Psoas muscle (tissue), 8 donors: ENCODE measurements at regions of chr11 and their contacts with region 1.

Region 1: GRCh38 chr11:17432002-17432401 is 43.5 kb upstream of the KCNJ11 start:
- DNase-seq: no peak
- ATAC-seq: peak; percentile 61 to 86 (median 81)
- H3K4me3 ChIP-seq: no peak overlapping the region
- H3K27ac ChIP-seq: peak overlapping the region; percentile 18
- H3K4me1 ChIP-seq: peaks cover 20% of the 10 kb centered on the region
- H3K27me3 ChIP-seq: no peaks in the 10 kb centered on the region
- CTCF ChIP-seq: no peak

Region 2: DNA sequence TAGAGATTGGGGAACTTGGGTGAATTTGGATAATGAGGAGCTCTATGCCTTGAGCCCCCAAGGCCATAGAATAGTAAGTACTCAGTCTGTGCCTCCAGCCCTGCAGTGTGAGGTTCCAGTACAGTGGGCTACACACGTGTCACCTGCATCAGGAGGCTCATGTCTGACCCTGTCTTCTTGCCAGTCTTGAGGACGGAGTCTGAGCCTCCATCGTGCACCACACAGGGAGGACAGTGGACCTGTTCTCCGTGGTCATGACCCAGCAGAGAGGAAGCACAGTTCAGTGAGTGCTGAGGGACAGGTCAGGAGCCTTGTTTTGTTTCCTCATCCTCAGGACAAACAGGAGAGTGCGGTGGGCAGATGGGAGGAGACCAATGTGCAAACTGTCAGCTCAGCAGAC is 385.3 kb before region 1 on chr11:
- intact Hi-C with region 1: no loop called
- DNase-seq: no peak
- ATAC-seq: no peak
- H3K4me3 ChIP-seq: no peak overlapping the region
- H3K27ac ChIP-seq: no peak overlapping the region
- H3K4me1 ChIP-seq: no peaks in the 10 kb centered on the region
- H3K27me3 ChIP-seq: no peaks in the 10 kb centered on the region
- CTCF ChIP-seq: no peak

Region 3: DNA sequence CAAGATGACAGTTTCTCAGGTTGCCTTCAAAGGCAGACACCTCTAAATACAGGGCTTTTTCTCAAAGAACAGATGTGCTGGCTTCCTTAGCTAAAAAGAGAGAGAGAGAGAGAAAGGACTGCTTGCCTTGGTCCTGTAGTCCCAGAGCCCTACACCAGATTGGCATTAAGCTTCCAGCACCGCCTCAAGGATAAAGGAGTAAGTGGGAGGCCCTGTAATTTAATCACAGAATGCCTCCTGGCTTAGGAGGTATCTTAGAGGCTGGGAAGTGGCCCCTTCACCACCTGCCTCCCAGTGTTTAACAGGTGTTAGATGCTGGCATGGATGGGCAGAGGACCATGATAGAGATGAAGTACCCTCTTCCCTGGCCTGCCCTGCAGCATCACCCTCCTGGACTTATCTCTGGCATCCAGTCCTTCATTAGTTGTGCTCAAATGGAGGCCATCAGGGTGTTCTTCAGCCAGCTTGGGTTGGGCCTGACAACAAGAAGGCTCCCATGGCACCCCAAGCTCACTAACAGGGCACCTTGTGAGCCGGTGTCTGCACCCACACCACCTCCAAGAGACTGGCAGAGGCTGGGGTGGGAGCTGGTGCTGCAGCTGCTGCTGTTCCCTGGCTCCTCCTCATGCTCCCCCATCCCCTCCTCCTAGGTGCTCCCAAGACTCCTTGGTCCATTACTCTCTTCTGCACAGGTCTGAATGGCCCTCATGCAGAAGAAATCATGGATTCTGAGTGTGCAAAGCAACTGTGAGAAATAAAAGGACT is 12.1 kb after region 1 on chr11:
- intact Hi-C with region 1: no loop called
- DNase-seq: no peak
- ATAC-seq: no peak
- H3K4me3 ChIP-seq: no peak overlapping the region
- H3K27ac ChIP-seq: no peak overlapping the region
- H3K4me1 ChIP-seq: no peaks in the 10 kb centered on the region
- H3K27me3 ChIP-seq: no peaks in the 10 kb centered on the region
- CTCF ChIP-seq: no peak

Region 4: GRCh38 chr11:17473071-17473744 is 41.2 kb after region 1 on chr11:
- intact Hi-C with region 1: loop called in 1 of 2 experiments (anchors 5 kb)
- DNase-seq: no peak
- ATAC-seq: no peak
- H3K4me3 ChIP-seq: no peak overlapping the region
- H3K27ac ChIP-seq: no peak overlapping the region
- H3K4me1 ChIP-seq: no peaks in the 10 kb centered on the region
- H3K27me3 ChIP-seq: peaks cover 0 to 30% (median 7%) of the 10 kb centered on the region in 3 donors
- CTCF ChIP-seq: no peak

Region 5: GRCh38 chr11:17483505-17483904 is 51.5 kb after region 1 on chr11:
- intact Hi-C with region 1: no loop called
- DNase-seq: no peak
- ATAC-seq: no peak
- H3K4me3 ChIP-seq: no peak overlapping the region
- H3K27ac ChIP-seq: no peak overlapping the region
- H3K4me1 ChIP-seq: no peaks in the 10 kb centered on the region
- H3K27me3 ChIP-seq: no peaks in the 10 kb centered on the region
- CTCF ChIP-seq: no peak

Region 6: DNA sequence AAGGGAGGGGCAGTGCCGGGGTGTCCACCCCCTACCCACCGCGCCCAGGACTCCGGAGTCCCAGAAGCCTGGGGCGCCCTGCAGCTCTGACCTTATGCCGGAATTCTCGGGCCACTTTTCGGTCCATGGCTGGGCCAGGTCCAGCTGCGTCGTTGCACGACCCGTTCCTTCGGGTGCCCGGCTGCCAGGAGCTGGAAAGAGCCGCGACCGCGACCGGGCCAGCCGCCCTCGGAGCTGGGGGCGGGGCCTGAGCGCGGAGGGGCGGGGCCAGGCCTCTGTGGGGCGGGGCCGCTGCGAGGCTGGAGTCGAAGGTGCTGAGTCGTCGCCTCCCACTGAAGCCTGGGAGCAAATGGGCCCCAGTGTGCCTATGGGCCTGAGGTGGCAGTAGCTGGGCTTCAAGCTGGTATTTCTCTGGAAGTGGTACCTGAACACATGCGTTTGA is 112.2 kb after region 1 on chr11 and contains the start of gene USH1C:
- intact Hi-C with region 1: no loop called
- DNase-seq: peak in 1 of 2 donors; percentile 35
- ATAC-seq: peak; percentile 78 to 90 (median 84)
- H3K4me3 ChIP-seq: peak within 1 kb of the TSS; percentile 32
- H3K27ac ChIP-seq: no peak within 1 kb of the TSS
- H3K4me1 ChIP-seq: no peaks in the 10 kb centered on the region
- H3K27me3 ChIP-seq: peaks cover 0 to 14% (median 2%) of the 10 kb centered on the region in 3 donors
- CTCF ChIP-seq: no peak
- total RNA-seq, gene USH1C: not detected